ENCODE measurements at regions of chr10 and their contacts with region 1.

Region 1: GRCh38 chr10:124719213-124719851 is 24.8 kb downstream of the FAM53B start:
- DNase-seq: peak; percentile 44 to 92 (median 74)
- ATAC-seq: peak; percentile 49
- H3K4me3 ChIP-seq: peak overlapping the region; percentile 17 to 19
- H3K4me3 Mint-ChIP-seq: peak overlapping the region; percentile 80
- H3K27ac ChIP-seq: peak overlapping the region; percentile 59 to 90
- H3K27ac Mint-ChIP-seq: peak overlapping the region; percentile 99
- H3K4me1 ChIP-seq: peaks cover 93% of the 10 kb centered on the region
- H3K4me1 Mint-ChIP-seq: peaks cover 91% of the 10 kb centered on the region
- H3K27me3 ChIP-seq: no peaks in the 10 kb centered on the region
- H3K27me3 Mint-ChIP-seq: no peaks in the 10 kb centered on the region
- CTCF ChIP-seq: peak; percentile 59

Region 2: GRCh38 chr10:123942114-123942807 is 777.1 kb before region 1 on chr10:
- CTCF ChIA-PET with region 1: no interaction called
- POLR2A ChIA-PET with region 1: no interaction called
- intact Hi-C with region 1: no loop called
- DNase-seq: no peak
- ATAC-seq: no peak
- H3K4me3 ChIP-seq: no peak overlapping the region
- H3K4me3 Mint-ChIP-seq: no peak overlapping the region
- H3K27ac ChIP-seq: no peak overlapping the region
- H3K27ac Mint-ChIP-seq: no peak overlapping the region
- H3K4me1 ChIP-seq: no peaks in the 10 kb centered on the region
- H3K4me1 Mint-ChIP-seq: no peaks in the 10 kb centered on the region
- H3K27me3 ChIP-seq: no peaks in the 10 kb centered on the region
- H3K27me3 Mint-ChIP-seq: peaks cover 3% of the 10 kb centered on the region
- CTCF ChIP-seq: no peak

Region 3: DNA sequence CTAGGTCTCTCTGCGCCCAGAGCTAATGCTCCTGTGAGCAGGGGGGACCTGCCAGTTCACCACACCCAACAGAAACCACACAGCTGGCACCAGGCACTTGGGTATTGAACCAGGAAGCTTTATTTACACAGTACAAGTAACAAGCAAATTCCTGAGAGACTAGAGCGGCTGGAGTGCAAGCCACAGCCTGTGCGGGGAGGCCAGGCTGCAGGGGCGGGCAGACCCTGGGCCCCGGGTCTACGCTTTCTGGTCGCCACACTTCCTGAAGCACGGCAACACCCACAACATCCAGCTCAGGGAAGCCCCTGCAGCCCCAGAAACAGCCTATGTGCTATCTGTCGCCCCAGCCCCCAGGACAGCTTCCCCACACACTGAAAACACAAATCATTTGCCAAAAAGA is 100.1 kb before region 1 on chr10:
- CTCF ChIA-PET with region 1: interaction called, 48 read pairs
- POLR2A ChIA-PET with region 1: no interaction called
- intact Hi-C with region 1: no loop called
- DNase-seq: peak in 5 of 9 experiments; percentile 25 to 78 (median 49)
- ATAC-seq: peak; percentile 76
- H3K4me3 ChIP-seq: no peak overlapping the region
- H3K4me3 Mint-ChIP-seq: peak overlapping the region; percentile 59
- H3K27ac ChIP-seq: peak overlapping the region in 1 of 2 experiments; percentile 66
- H3K27ac Mint-ChIP-seq: peak overlapping the region; percentile 87
- H3K4me1 ChIP-seq: peaks cover 37% of the 10 kb centered on the region
- H3K4me1 Mint-ChIP-seq: peaks cover 38% of the 10 kb centered on the region
- H3K27me3 ChIP-seq: no peaks in the 10 kb centered on the region
- H3K27me3 Mint-ChIP-seq: no peaks in the 10 kb centered on the region
- CTCF ChIP-seq: no peak

Region 4: DNA sequence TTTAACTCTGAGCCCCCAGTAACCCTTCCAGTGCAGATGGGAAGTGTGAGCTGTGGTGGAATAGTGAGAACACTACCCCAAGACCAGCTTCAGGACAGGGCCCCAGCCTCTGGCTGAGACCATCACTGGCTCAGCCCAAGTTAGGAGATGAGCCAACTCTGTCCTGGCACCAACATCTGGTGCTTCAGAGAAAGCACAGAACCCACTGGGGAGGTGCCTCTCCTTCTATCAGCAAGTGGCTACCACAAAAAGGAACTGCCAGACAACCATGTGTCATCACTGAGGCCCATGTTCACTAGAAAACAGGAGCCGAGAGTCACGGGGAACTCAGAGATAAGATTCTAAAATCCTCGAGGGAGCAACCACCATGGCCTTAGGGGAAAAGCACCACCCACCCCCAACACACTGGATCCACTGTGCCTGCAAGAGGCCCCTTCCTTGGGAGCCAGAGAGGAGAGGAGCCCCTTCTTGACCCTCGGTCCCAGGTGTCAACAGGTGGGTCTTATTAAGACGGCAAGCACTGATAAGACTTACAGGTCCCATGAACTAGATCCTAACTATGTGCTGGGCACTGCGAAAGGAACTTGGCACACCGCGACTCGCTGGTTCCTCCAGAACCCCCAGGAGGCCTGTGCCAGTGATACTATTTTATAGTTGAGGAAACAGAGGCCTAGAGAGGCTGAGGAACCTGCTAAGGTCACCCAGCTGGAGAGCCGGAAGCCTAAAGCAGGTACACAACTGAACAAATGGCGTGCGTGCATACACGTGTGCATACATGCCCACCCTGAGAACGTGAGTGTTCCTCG is 77.8 kb before region 1 on chr10:
- CTCF ChIA-PET with region 1: interaction called, 60 read pairs
- POLR2A ChIA-PET with region 1: interaction called, 52 read pairs
- intact Hi-C with region 1: loop called in 1 of 2 experiments (anchors 1 kb)
- DNase-seq: peak in 7 of 9 experiments; percentile 41 to 85 (median 64)
- ATAC-seq: peak; percentile 71
- H3K4me3 ChIP-seq: peak overlapping the region in 1 of 2 experiments; percentile 13
- H3K4me3 Mint-ChIP-seq: peak overlapping the region; percentile 59
- H3K27ac ChIP-seq: peak overlapping the region; percentile 47 to 68
- H3K27ac Mint-ChIP-seq: peak overlapping the region; percentile 94
- H3K4me1 ChIP-seq: peaks cover 66% of the 10 kb centered on the region
- H3K4me1 Mint-ChIP-seq: peaks cover 71% of the 10 kb centered on the region
- H3K27me3 ChIP-seq: no peaks in the 10 kb centered on the region
- H3K27me3 Mint-ChIP-seq: no peaks in the 10 kb centered on the region
- CTCF ChIP-seq: no peak

Region 5: GRCh38 chr10:124671486-124672075 is 47.8 kb before region 1 on chr10:
- CTCF ChIA-PET with region 1: interaction called, 23 read pairs
- POLR2A ChIA-PET with region 1: interaction called, 8 read pairs
- intact Hi-C with region 1: no loop called
- DNase-seq: peak in 2 of 9 experiments; percentile 44 to 70
- ATAC-seq: peak; percentile 44
- H3K4me3 ChIP-seq: peak overlapping the region; percentile 1 to 2
- H3K4me3 Mint-ChIP-seq: peak overlapping the region; percentile 60
- H3K27ac ChIP-seq: peak overlapping the region; percentile 9 to 69
- H3K27ac Mint-ChIP-seq: peak overlapping the region; percentile 84
- H3K4me1 ChIP-seq: peaks cover 83% of the 10 kb centered on the region
- H3K4me1 Mint-ChIP-seq: peaks cover 77% of the 10 kb centered on the region
- H3K27me3 ChIP-seq: no peaks in the 10 kb centered on the region
- H3K27me3 Mint-ChIP-seq: no peaks in the 10 kb centered on the region
- CTCF ChIP-seq: no peak

Region 6: GRCh38 chr10:124688889-124689670 is 30.3 kb before region 1 on chr10:
- CTCF ChIA-PET with region 1: interaction called, 20 read pairs
- POLR2A ChIA-PET with region 1: interaction called, 27 read pairs
- intact Hi-C with region 1: no loop called
- DNase-seq: peak in 8 of 9 experiments; percentile 19 to 91 (median 60)
- ATAC-seq: peak; percentile 84
- H3K4me3 ChIP-seq: no peak overlapping the region
- H3K4me3 Mint-ChIP-seq: peak overlapping the region; percentile 47
- H3K27ac ChIP-seq: peak overlapping the region; percentile 12 to 72
- H3K27ac Mint-ChIP-seq: peak overlapping the region; percentile 87
- H3K4me1 ChIP-seq: peaks cover 72% of the 10 kb centered on the region
- H3K4me1 Mint-ChIP-seq: peaks cover 81% of the 10 kb centered on the region
- H3K27me3 ChIP-seq: no peaks in the 10 kb centered on the region
- H3K27me3 Mint-ChIP-seq: no peaks in the 10 kb centered on the region
- CTCF ChIP-seq: no peak

Region 7: DNA sequence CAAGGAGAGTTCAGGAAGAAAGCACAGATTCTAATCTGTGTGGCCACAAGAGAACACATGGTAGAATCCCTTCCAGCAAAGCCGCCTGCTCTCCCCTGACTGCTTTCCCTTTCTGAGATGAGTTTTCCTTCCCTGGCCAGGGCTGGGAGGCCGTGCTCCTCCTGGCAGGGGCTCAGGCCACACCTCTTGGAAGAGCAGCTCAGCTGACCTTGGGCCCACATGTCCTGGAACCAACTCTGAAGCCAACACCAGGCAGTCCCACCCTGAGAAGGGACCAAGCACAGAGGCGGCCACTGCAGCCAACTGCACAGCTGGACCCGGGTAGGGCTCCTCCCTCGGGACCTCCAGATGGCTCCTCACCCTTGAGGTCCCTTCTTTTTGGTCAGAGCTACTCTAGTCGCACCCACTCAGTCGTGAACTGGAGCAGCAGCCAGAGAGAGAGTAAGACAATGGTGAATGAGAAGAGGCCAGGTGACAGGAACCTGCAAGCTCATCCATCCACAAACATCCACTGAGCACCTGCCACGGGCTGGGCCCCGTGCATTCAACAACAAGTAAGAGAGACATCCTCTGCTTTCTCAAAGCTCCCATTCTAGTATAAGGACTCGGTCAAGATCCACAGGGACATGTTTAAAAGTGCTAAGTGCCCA is 15.4 kb before region 1 on chr10:
- CTCF ChIA-PET with region 1: interaction called, 115 read pairs
- POLR2A ChIA-PET with region 1: interaction called, 43 read pairs
- intact Hi-C with region 1: loop called (anchors 1 kb)
- DNase-seq: no peak
- ATAC-seq: no peak
- H3K4me3 ChIP-seq: no peak overlapping the region
- H3K4me3 Mint-ChIP-seq: peak overlapping the region; percentile 23
- H3K27ac ChIP-seq: peak overlapping the region in 1 of 2 experiments; percentile 72
- H3K27ac Mint-ChIP-seq: peak overlapping the region; percentile 97
- H3K4me1 ChIP-seq: peaks cover 83% of the 10 kb centered on the region
- H3K4me1 Mint-ChIP-seq: peaks cover 92% of the 10 kb centered on the region
- H3K27me3 ChIP-seq: no peaks in the 10 kb centered on the region
- H3K27me3 Mint-ChIP-seq: no peaks in the 10 kb centered on the region
- CTCF ChIP-seq: no peak